BJ (cell line): ENCODE measurements at regions of chr2 and their contacts with region 1.

Region 1: DNA sequence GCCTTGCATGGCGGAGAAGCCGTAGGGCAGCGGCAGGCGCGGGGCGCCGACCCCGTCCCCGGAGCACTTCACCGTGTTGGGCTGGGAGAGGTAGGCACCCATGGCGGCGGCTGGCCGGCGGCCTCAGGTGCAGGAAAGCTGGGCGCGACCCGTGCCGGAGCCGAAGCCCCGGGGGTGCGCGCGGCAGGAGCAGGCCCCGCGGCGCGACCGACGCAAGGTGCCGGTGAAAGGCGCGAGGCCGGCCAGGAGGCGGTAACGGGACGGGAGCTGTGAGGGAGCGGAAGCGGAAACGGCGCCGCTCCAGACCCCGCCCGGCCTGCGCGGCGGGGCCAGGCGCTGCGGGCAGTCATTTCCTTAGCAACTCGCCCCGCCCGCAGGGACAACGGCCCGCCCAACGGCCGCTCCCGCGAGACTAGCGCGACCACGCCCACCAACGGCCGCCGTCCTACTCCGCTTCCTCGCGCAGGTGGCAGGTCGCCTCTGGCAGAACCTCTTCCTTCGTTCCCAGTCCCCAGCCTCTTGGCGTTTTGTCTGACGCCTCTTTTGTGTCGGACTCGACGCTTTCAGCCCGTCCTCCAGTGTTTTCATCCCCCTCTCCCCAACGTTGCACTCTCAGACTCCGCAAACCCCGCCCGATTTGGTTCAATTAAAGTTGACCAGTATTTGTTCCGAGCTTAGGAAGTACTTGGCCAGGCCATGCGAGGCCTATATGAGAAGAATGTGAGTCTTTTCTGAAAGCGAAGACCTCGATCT is at the start of gene PPM1G:
- DNase-seq: peak; percentile 60
- H3K4me3 ChIP-seq: peak within 1 kb of the TSS; percentile 99
- H3K27me3 ChIP-seq: no peaks in the 10 kb centered on the region
- CTCF ChIP-seq: no peak
- polyA plus RNA-seq, gene PPM1G: 45.8 and 48.3 TPM in 2 replicates

Region 2: GRCh38 chr2:27356056-27356381 is 53.5 kb before region 1 on chr2:
- CTCF ChIA-PET with region 1: no interaction called
- POLR2A ChIA-PET with region 1: no interaction called
- DNase-seq: no peak
- H3K4me3 ChIP-seq: peak overlapping the region; percentile 67
- H3K27me3 ChIP-seq: no peaks in the 10 kb centered on the region
- CTCF ChIP-seq: no peak

Region 3: DNA sequence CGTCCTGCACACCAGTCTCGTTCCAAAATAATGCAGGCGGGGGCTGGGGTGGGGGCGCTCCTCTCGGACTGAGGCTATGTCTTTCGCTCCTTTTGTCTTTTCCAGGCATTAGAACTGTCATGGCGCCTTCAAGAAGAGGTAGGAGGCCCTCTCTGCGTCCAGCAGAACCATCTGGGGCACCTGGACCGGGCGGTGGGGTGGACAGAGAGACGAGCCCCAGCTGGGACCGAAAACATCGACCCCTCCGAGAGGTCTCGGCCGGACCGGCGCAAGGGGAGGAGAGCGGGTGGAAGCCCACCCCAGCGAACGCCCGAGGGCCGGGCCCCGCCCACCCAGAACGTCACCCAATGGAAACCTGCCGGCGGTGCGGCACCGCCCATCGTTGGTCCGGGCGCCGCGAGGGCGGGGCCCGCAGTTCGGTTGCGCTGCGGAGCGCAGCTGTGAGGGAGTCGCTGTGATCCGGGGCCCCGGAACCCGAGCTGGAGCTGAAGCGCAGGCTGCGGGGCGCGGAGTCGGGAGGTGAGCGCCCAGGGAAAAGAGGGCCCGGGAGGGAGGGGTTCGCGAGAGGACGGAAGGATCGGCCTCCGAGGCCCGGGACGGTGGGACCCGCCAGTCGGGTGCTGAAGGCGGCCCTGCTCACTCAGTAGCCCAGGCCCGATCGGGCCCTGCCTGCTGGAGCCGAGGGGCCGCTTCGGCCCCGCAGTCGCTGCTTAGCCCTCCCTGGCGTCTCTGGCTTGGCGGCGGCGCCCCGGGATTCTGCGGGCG is 18.9 kb after region 1 on chr2 and contains the start of gene NRBP1:
- CTCF ChIA-PET with region 1: interaction called, 11 read pairs
- POLR2A ChIA-PET with region 1: no interaction called
- DNase-seq: no peak
- H3K4me3 ChIP-seq: peak within 1 kb of the TSS; percentile 97
- H3K27me3 ChIP-seq: no peaks in the 10 kb centered on the region
- CTCF ChIP-seq: peak; percentile 19; the same call in 1 of the 2 replicates
- polyA plus RNA-seq, gene NRBP1: 234 and 270 TPM in 2 replicates